SK-N-SH (cell line): ENCODE measurements at regions of chr19 and their contacts with region 1.

Region 1: GRCh38 chr19:52189735-52190486 is at the start of gene PPP2R1A:
- DNase-seq: peak; percentile 97
- H3K4me3 ChIP-seq: peak within 1 kb of the TSS; percentile 68 to 81
- H3K27ac ChIP-seq: peak within 1 kb of the TSS; percentile 91 to 94
- H3K4me1 ChIP-seq: peaks cover 12 to 17% of the 10 kb centered on the region in 2 experiments; a peak in 3 of 4 replicates
- H3K27me3 ChIP-seq: no peaks in the 10 kb centered on the region
- CTCF ChIP-seq: no peak
- EP300 ChIP-seq: no peak
- RAD21 ChIP-seq: no peak
- polyA plus RNA-seq, gene PPP2R1A: 162 and 163 TPM in 2 replicates

Region 2: GRCh38 chr19:52139252-52140031 is 50.5 kb before region 1 on chr19 and contains the start of gene ZNF616:
- CTCF ChIA-PET with region 1: interaction called, 14 read pairs
- POLR2A ChIA-PET with region 1: interaction called, 10 read pairs
- DNase-seq: peak; percentile 81
- H3K4me3 ChIP-seq: peak within 1 kb of the TSS; percentile 82 to 99
- H3K27ac ChIP-seq: peak within 1 kb of the TSS; percentile 92 to 97
- H3K4me1 ChIP-seq: peaks cover 0 to 9% of the 10 kb centered on the region in 2 experiments; a peak in 2 of 4 replicates
- H3K27me3 ChIP-seq: no peaks in the 10 kb centered on the region
- CTCF ChIP-seq: peak; percentile 75
- EP300 ChIP-seq: no peak
- RAD21 ChIP-seq: peak; percentile 79
- polyA plus RNA-seq, gene ZNF616: 1.5 and 2.0 TPM in 2 replicates

Region 3: DNA sequence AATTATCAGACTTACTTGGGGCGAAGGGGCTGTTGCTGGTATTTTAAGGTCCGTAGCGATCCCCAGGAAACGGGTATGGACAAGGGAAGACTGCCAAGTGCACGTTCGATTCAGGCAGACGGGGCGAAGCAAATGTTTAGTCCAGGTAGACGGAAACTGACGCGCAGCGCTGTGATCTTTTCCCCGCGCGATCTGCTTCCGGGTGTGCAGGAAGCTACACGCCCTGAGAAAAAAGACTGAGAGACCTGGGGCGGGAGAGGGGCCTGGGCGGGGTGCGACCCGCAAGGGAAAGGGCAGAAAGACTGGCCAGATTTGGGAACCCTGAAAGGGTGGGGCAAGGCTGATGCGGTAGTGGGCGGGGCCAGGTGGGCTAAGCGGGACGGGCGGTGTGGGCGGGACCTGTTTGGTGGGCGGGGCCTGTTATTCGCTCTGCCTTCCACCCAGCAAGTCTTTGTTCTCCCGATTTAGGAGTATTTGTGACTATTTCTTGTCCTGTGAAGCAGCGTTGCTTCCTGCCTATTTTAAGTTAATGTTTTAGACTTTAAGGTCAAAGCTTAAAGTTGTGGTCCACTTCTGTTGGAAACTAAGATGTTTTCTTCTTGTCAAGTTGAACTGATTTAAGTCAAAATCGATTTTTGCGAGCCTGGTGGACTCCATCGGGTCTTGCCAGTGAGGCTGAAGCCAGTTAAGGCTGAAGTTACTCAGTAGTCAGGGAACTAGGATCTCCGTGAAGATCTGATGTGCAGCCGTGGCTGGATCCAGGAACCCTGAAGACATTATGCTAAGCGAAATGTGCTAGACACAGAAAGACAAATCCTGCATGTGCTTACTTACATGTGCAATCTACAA is 18.4 kb before region 1 on chr19 and contains the start of gene ZNF836:
- CTCF ChIA-PET with region 1: interaction called, 5 read pairs
- POLR2A ChIA-PET with region 1: interaction called, 13 read pairs
- DNase-seq: peak; percentile 92
- H3K4me3 ChIP-seq: peak within 1 kb of the TSS; percentile 72 to 76
- H3K27ac ChIP-seq: peak within 1 kb of the TSS; percentile 33 to 81; a peak in 3 of 4 replicates
- H3K4me1 ChIP-seq: peaks cover 0 to 12% of the 10 kb centered on the region in 2 experiments; a peak in 1 of 4 replicates
- H3K27me3 ChIP-seq: no peaks in the 10 kb centered on the region
- CTCF ChIP-seq: no peak
- EP300 ChIP-seq: no peak
- RAD21 ChIP-seq: no peak
- polyA plus RNA-seq, gene ZNF836: 1.6 and 2.3 TPM in 2 replicates

Region 4: DNA sequence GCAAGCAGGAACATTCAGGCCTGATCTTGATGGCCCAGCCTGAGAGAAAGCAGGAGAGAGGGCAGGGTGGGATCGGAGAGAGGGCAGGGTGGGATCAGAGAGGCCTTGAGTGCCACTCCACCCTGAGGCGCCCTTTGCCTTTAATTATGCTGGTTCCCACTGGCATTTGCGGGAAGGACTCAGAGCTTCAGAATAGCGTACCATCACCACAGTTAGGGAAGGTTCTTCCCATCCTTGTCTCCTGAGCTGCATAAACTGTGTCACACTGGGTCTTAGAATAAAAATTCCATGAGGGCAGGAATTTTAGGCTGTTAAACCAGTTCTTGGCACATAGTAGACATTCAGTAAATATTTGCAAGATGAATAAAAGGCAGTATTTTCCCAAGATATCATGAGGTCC is 24.3 kb after region 1 on chr19:
- CTCF ChIA-PET with region 1: no interaction called
- POLR2A ChIA-PET with region 1: no interaction called
- DNase-seq: no peak
- H3K4me3 ChIP-seq: no peak overlapping the region
- H3K27ac ChIP-seq: no peak overlapping the region
- H3K4me1 ChIP-seq: no peaks in the 10 kb centered on the region
- H3K27me3 ChIP-seq: no peaks in the 10 kb centered on the region
- CTCF ChIP-seq: no peak
- EP300 ChIP-seq: no peak
- RAD21 ChIP-seq: no peak

Region 5: DNA sequence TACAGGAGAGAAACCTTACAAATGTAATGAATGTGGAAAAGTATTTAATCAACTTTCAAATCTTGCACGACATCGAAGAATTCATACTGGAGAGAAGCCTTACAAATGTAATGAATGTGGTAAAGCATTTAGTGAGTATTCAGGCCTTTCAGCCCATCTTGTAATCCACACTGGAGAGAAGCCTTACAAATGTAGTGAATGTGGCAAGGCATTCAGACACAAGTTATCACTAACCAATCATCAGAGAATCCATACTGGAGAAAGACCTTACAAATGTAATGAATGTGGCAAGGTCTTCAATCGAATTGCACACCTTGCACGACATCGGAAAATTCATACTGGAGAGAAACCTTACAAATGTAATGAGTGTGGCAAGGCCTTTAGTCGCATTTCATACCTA is 132.5 kb after region 1 on chr19:
- CTCF ChIA-PET with region 1: no interaction called
- POLR2A ChIA-PET with region 1: no interaction called
- DNase-seq: no peak
- H3K4me3 ChIP-seq: peak overlapping the region in 1 of 2 experiments; percentile 10; a peak in 1 of 4 replicates
- H3K27ac ChIP-seq: no peak overlapping the region
- H3K4me1 ChIP-seq: no peaks in the 10 kb centered on the region
- H3K27me3 ChIP-seq: no peaks in the 10 kb centered on the region
- CTCF ChIP-seq: no peak
- EP300 ChIP-seq: no peak
- RAD21 ChIP-seq: no peak